GM10248 (cell line): ENCODE measurements at regions of chr21 and their contacts with region 1.

Region 1: GRCh38 chr21:35204850-35205541 is 155.9 kb upstream of the RUNX1 start:
- DNase-seq: peak; percentile 29
- CTCF ChIP-seq: no peak

Region 2: DNA sequence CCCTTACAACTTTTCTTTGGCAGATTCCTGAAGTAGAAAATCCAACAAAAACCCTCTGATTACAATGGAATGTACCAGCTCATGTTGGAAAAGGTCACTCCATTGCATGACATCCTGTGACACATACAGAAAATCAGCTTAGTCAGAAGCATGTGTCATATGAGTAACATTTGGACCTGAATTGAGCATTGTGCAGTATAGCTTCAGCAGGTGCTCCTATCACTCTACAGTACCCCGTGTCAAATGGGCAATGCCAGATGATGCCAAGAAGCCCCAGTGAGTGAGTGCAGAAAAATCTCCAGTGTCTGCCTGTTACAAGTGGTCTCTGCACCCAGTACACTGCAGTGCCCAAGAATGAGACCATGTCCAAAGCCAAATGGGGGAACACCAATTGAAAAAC is 26.2 kb before region 1 on chr21:
- CTCF ChIA-PET with region 1: no interaction called
- POLR2A ChIA-PET with region 1: no interaction called
- DNase-seq: no peak
- CTCF ChIP-seq: no peak

Region 3: GRCh38 chr21:35189077-35189863 is 15.7 kb before region 1 on chr21:
- CTCF ChIA-PET with region 1: interaction called, 18 read pairs
- POLR2A ChIA-PET with region 1: no interaction called
- DNase-seq: peak; percentile 65
- CTCF ChIP-seq: no peak

Region 4: GRCh38 chr21:35268817-35269216 is 63.8 kb after region 1 on chr21:
- CTCF ChIA-PET with region 1: no interaction called
- POLR2A ChIA-PET with region 1: no interaction called
- DNase-seq: no peak
- CTCF ChIP-seq: no peak